Activated naive CD4-positive, alpha-beta T cell treated with anti-CD3 and anti-CD28 coated beads for 36 hours (primary cell): ENCODE measurements at regions of chr1 and their contacts with region 1.

Region 1: GRCh38 chr1:242523719-242524570 is 552 bp downstream of the PLD5 start:
- DNase-seq: peak; percentile 22
- H3K4me3 Mint-ChIP-seq: peak overlapping the region; percentile 34
- H3K27ac Mint-ChIP-seq: no peak overlapping the region
- H3K4me1 Mint-ChIP-seq: peaks cover 12% of the 10 kb centered on the region
- H3K27me3 Mint-ChIP-seq: peaks cover 46% of the 10 kb centered on the region

Region 2: GRCh38 chr1:242402956-242403355 is 121.0 kb before region 1 on chr1:
- CTCF ChIA-PET with region 1: no interaction called
- intact Hi-C with region 1: no loop called
- DNase-seq: no peak
- H3K4me3 Mint-ChIP-seq: no peak overlapping the region
- H3K27ac Mint-ChIP-seq: no peak overlapping the region
- H3K4me1 Mint-ChIP-seq: no peaks in the 10 kb centered on the region
- H3K27me3 Mint-ChIP-seq: peaks cover 8% of the 10 kb centered on the region

Region 3: DNA sequence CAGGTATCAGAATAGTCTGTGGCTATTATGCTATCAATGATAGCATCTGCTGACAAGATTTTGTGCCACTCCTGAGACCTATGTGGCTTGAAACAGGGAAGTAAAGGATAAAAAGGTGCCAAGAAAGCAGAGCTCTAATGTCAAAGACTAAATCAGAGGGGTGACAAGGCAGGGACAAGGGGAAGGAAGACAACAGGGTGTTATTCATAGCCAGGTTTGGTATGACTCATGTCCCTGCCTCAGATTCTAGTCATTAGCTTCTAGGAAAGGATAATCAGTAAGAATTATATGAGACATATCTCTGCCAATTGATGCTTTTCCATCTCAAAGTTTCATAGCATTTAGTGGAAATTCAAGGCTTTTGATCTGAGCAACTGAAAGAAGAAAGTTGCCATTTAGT is 32.3 kb after region 1 on chr1:
- CTCF ChIA-PET with region 1: no interaction called
- intact Hi-C with region 1: loop called (anchors 2 kb)
- DNase-seq: no peak
- H3K4me3 Mint-ChIP-seq: no peak overlapping the region
- H3K27ac Mint-ChIP-seq: no peak overlapping the region
- H3K4me1 Mint-ChIP-seq: no peaks in the 10 kb centered on the region
- H3K27me3 Mint-ChIP-seq: peaks cover 2% of the 10 kb centered on the region

Region 4: DNA sequence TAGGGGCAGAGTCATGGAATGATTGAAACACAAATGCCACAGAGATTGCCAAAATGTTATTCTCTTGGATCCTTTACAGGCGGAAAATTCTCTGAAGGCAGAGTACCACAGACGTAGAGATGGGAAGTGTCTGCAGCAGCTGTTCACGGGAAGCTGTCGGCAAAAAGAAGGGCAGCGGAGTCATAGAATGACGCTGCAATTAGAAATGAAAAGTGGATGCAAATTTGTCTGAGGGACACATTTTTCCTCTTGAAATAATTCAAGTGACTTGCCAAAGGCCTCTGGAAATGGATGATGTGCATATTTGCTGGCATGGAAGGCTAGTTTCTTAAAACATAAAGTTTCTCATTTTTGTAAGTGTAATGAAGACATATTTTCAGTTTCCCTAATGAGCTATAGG is 78.1 kb after region 1 on chr1:
- CTCF ChIA-PET with region 1: no interaction called
- intact Hi-C with region 1: no loop called
- DNase-seq: no peak
- H3K4me3 Mint-ChIP-seq: no peak overlapping the region
- H3K27ac Mint-ChIP-seq: no peak overlapping the region
- H3K4me1 Mint-ChIP-seq: no peaks in the 10 kb centered on the region
- H3K27me3 Mint-ChIP-seq: no peaks in the 10 kb centered on the region

Region 5: GRCh38 chr1:242703467-242703866 is 179.5 kb after region 1 on chr1:
- CTCF ChIA-PET with region 1: no interaction called
- intact Hi-C with region 1: no loop called
- DNase-seq: no peak
- H3K4me3 Mint-ChIP-seq: no peak overlapping the region
- H3K27ac Mint-ChIP-seq: no peak overlapping the region
- H3K4me1 Mint-ChIP-seq: no peaks in the 10 kb centered on the region
- H3K27me3 Mint-ChIP-seq: peaks cover 6% of the 10 kb centered on the region

Region 6: GRCh38 chr1:243287652-243288051 is 763.7 kb after region 1 on chr1:
- CTCF ChIA-PET with region 1: no interaction called
- intact Hi-C with region 1: loop called (anchors 2 kb)
- DNase-seq: peak; percentile 23
- H3K4me3 Mint-ChIP-seq: no peak overlapping the region
- H3K27ac Mint-ChIP-seq: peak overlapping the region; percentile 83
- H3K4me1 Mint-ChIP-seq: peaks cover 40% of the 10 kb centered on the region
- H3K27me3 Mint-ChIP-seq: no peaks in the 10 kb centered on the region

Region 7: DNA sequence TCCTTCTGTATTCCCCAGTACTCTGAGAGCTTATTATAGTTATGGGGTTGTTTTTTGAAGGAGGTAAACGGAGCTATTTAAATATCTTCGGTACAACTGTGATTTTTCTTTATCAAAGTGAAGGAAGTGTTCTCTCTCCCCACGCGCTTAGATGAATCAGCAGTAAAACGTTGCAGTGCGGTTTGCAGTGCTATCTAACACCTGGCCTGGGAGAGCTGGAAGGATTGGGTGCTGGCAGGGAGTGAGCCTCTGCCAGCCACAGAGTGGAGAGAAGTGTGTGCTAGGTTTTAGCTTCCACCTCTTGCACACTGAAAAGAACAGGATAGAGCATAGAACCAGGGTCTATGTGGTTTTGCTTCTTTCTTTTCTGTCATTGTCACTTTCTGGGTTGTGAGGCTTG is 897.8 kb after region 1 on chr1:
- CTCF ChIA-PET with region 1: no interaction called
- intact Hi-C with region 1: loop called (anchors 5 kb)
- DNase-seq: peak; percentile 77
- H3K4me3 Mint-ChIP-seq: peak overlapping the region; percentile 50
- H3K27ac Mint-ChIP-seq: no peak overlapping the region
- H3K4me1 Mint-ChIP-seq: peaks cover 25% of the 10 kb centered on the region
- H3K27me3 Mint-ChIP-seq: no peaks in the 10 kb centered on the region